Activated T-helper 2 cell treated with anti-CD3 and anti-CD28 coated beads, Interferon-gamma antibody, Interleukin-2, Interleukin-4, amounts not matched to agents 10 μg/mL and 5 μg/mL and 100 μg/mL, durations not matched to agents 14 hours and 24 hours and 36 hours (primary cell): ENCODE measurements at regions of chrX and their contacts with region 1.

Region 1: DNA sequence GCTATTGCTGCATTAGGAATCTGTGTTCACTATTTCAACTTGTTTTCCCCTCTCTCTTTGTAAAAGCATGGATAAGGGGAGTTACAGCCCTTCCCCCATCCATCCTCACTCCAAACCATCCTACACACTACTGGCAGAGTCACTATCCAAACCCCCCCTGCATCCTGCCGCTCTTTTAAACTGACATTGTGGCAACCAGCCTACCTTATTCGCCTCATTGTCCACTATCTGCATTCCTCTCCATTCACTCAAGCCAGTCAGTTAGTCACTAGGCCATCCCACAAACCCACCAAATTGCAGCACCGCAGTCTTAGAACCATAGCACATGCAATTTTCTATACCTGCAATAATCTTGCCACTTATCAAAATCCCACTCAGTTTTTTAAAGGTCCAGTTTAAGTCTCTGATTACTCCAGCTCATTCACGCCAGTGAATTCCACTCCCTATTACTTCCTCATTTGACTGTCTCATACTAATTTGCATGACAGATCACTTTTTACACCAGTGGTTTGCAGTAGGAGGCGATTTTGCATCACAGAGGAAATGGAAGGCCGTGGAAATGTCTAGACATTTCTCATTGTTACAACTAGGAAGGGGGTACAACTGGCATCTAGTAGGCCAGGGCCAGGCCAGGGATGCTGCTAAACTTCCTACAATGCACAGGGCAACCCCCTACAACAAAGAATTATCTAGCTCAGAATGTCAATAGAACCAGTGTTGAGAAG is 181.8 kb downstream of the HS6ST2 start:
- DNase-seq: no peak
- H3K4me3 Mint-ChIP-seq: no peak overlapping the region
- H3K27ac Mint-ChIP-seq: no peak overlapping the region
- H3K4me1 Mint-ChIP-seq: peaks cover 18% of the 10 kb centered on the region
- H3K27me3 Mint-ChIP-seq: no peaks in the 10 kb centered on the region

Region 2: DNA sequence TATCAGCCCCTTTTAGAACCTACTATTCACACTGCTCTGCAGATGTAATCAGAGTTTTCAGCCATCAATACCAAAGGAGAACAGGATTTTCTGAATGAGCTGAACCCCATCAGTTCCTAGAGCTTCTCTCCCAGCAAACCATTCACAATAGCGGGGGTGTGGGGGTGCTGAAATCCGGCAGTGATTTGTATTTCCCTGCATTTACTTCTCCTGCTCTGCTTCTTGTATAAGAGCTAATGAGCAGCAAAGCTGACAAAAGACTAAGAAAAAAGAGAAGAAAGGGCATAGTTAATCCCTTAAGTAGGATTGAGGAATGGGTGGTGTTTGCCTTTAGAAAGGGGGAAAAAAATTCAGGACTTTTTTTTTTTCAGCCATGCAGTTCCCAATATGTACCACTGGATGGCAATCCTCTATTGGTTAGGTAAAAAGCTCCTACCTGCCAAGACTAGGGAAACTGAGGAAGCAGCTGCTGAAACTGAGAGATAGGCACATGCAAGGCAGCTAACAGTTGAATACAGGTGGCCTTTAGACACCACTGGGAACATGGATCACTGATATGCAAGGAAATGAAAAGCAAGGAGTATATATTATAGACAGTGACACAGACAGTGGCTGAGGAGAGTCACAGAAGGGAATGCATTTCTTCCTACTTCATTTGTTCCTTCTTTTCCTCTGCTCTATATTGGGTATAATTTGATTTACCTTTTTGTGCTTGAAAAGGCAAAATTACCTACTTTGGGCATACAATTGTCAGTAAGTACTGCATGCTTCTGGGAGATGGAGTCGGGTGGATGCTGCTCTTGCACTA is 36.1 kb before region 1 on chrX:
- intact Hi-C with region 1: loop called (anchors 1 kb)
- DNase-seq: no peak
- H3K4me3 Mint-ChIP-seq: no peak overlapping the region
- H3K27ac Mint-ChIP-seq: no peak overlapping the region
- H3K4me1 Mint-ChIP-seq: peaks cover 21% of the 10 kb centered on the region
- H3K27me3 Mint-ChIP-seq: no peaks in the 10 kb centered on the region